Naive thymus-derived CD4-positive, alpha-beta T cell (primary cell): ENCODE measurements at regions of chr17 and their contacts with region 1.

Region 1: GRCh38 chr17:73645050-73645978 is 1.1 kb upstream of the SDK2 start:
- DNase-seq: peak in 7 of 9 donors; percentile 45 to 58 (median 49)
- ATAC-seq: peak; percentile 72
- H3K4me3 ChIP-seq: no peak overlapping the region
- H3K4me3 Mint-ChIP-seq: peak overlapping the region; percentile 45 to 95 (median 72)
- H3K27ac ChIP-seq: no peak overlapping the region
- H3K27ac Mint-ChIP-seq: no peak overlapping the region
- H3K4me1 ChIP-seq: peaks cover 0 to 13% of the 10 kb centered on the region in 2 donors
- H3K4me1 Mint-ChIP-seq: peaks cover 19 to 38% (median 25%) of the 10 kb centered on the region in 7 donors
- H3K27me3 ChIP-seq: no peaks in the 10 kb centered on the region
- H3K27me3 Mint-ChIP-seq: peaks cover 0 to 75% (median 5%) of the 10 kb centered on the region in 5 donors

Region 2: DNA sequence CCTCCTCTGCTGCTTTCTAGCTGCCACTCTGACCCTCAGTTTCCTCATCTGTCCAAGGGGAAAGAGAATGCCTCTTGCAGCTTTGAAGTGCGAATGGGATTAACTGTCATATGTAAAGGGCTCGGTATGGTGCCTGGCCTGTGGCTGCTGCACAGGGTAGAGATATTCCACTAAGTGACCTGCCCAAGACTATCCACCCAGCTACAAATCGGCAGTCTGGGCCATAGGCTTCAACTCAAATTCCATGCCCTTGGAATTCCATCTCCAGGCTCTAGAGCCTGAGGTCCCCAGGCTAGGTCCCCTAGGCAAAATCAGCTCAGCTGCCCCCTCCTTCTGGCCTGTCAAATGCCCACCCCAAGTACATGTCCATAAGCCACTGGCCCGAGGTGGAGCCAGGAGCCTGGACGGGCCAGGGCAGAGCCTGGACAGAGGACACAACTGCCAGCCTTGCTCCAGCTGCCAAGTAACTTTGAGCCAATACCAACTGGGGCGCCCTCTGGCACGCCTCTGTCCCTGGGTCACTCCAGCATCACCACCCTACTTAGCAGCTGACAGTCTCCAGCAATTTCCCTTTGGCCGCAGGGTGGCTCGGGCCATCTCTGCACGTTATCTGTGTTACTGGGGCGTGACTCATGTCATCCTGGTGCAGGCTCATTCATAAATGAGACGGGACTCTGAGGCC is 58.3 kb before region 1 on chr17:
- CTCF ChIA-PET with region 1: interaction called, 13 read pairs
- POLR2A ChIA-PET with region 1: no interaction called
- intact Hi-C with region 1: loop called (anchors 1 kb)
- DNase-seq: no peak
- ATAC-seq: no peak
- H3K4me3 ChIP-seq: no peak overlapping the region
- H3K4me3 Mint-ChIP-seq: no peak overlapping the region
- H3K27ac ChIP-seq: no peak overlapping the region
- H3K27ac Mint-ChIP-seq: peak overlapping the region in 7 of 9 donors; percentile 7 to 97 (median 74)
- H3K4me1 ChIP-seq: peaks cover 16 to 32% of the 10 kb centered on the region in 2 donors
- H3K4me1 Mint-ChIP-seq: peaks cover 26 to 68% (median 62%) of the 10 kb centered on the region in 7 donors
- H3K27me3 ChIP-seq: no peaks in the 10 kb centered on the region
- H3K27me3 Mint-ChIP-seq: no peaks in the 10 kb centered on the region

Region 3: DNA sequence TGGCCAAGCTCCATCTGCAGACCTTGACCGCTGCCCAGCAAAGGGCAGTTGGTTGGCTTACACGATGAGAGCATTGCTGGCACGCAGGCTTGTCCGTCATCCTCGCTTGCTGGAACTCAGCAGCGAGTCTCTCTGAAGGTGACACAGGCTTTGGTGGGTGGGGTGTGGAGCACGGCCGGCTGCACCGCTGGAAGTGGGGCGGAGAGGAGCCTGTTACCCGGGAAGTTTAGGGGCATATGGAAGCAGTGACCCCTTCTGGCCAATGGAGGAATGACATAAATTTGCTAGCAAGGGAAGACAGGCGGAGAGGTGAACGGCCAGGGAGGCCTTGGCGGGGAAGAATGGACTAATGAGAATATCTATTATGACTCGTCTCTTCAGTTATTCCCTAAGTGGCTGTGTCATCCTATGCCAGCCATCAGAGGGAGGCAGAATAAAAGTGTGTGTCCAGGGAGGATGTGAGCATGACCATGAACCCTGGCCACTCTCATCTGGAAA is 64.8 kb after region 1 on chr17:
- CTCF ChIA-PET with region 1: interaction called, 7 read pairs
- POLR2A ChIA-PET with region 1: no interaction called
- intact Hi-C with region 1: loop called (anchors 1 kb)
- DNase-seq: peak; percentile 40 to 81 (median 62)
- ATAC-seq: peak; percentile 83
- H3K4me3 ChIP-seq: no peak overlapping the region
- H3K4me3 Mint-ChIP-seq: peak overlapping the region in 5 of 10 donors; percentile 1 to 40 (median 34)
- H3K27ac ChIP-seq: no peak overlapping the region
- H3K27ac Mint-ChIP-seq: peak overlapping the region in 5 of 9 donors; percentile 12 to 88 (median 72)
- H3K4me1 ChIP-seq: peaks cover 0 to 11% of the 10 kb centered on the region in 2 donors
- H3K4me1 Mint-ChIP-seq: peaks cover 11 to 19% (median 17%) of the 10 kb centered on the region in 7 donors
- H3K27me3 ChIP-seq: no peaks in the 10 kb centered on the region
- H3K27me3 Mint-ChIP-seq: peaks cover 0 to 19% (median 0%) of the 10 kb centered on the region in 5 donors

Region 4: GRCh38 chr17:73841431-73842060 is 196.2 kb after region 1 on chr17:
- CTCF ChIA-PET with region 1: interaction called, 26 read pairs
- POLR2A ChIA-PET with region 1: no interaction called
- intact Hi-C with region 1: loop called in 1 of 2 experiments (anchors 1 kb)
- DNase-seq: peak in 3 of 9 donors; percentile 29 to 49 (median 33)
- ATAC-seq: peak; percentile 58
- H3K4me3 ChIP-seq: no peak overlapping the region
- H3K4me3 Mint-ChIP-seq: no peak overlapping the region
- H3K27ac ChIP-seq: no peak overlapping the region
- H3K27ac Mint-ChIP-seq: peak overlapping the region in 6 of 9 donors; percentile 12 to 63 (median 54)
- H3K4me1 ChIP-seq: no peaks in the 10 kb centered on the region
- H3K4me1 Mint-ChIP-seq: peaks cover 0 to 27% (median 13%) of the 10 kb centered on the region in 7 donors
- H3K27me3 ChIP-seq: no peaks in the 10 kb centered on the region
- H3K27me3 Mint-ChIP-seq: no peaks in the 10 kb centered on the region

Region 5: DNA sequence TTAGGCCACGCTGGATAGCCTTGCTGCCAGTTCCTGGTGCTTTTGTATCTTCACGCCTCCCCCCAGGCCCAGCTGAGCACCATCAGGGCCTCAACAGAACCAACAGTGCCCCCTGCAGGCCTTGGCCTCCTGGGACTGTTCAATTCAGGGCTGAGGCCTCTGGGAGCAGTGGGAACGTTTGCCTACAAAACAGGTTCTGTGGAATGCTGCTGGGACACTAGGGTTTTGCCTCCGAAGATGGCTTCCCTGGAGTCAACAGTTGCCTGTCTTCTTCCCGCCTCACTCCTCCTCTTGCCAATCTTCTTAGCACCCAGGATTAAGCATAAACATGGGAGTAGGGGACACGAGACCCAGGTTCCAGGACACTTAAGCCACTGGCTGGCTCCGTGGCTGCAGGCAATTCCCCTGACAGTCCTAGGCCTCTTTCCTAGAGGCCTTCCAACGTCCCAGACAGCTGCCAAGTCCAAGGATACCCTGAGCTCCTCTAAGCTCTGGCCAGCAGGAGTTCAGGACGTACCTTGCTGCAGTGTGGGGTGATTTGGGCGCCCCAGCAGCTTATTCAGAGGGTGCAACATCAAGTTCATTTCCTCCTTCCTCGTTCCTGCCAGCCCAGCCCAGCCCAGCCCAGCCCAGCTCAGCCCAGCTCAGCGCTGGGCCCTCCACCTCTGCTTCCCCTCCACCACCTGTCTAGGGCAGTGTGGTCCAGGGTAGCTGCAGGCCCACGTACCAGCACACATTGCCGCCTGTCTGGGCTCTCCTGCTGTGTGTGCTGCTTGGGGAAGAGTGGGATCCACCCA is 311.6 kb after region 1 on chr17:
- CTCF ChIA-PET with region 1: interaction called, 6 read pairs
- POLR2A ChIA-PET with region 1: no interaction called
- intact Hi-C with region 1: loop called in 1 of 2 experiments (anchors 1 kb)
- DNase-seq: peak; percentile 18 to 65 (median 49)
- ATAC-seq: peak; percentile 70
- H3K4me3 ChIP-seq: no peak overlapping the region
- H3K4me3 Mint-ChIP-seq: no peak overlapping the region
- H3K27ac ChIP-seq: no peak overlapping the region
- H3K27ac Mint-ChIP-seq: no peak overlapping the region
- H3K4me1 ChIP-seq: no peaks in the 10 kb centered on the region
- H3K4me1 Mint-ChIP-seq: peaks cover 0 to 4% (median 0%) of the 10 kb centered on the region in 7 donors
- H3K27me3 ChIP-seq: no peaks in the 10 kb centered on the region
- H3K27me3 Mint-ChIP-seq: peaks cover 3 to 7% (median 4%) of the 10 kb centered on the region in 5 donors